ENCODE measurements at regions of chr17 and their contacts with region 1.

Region 1: GRCh38 chr17:4565209-4566141 is 5.1 kb upstream of the GGT6 start:
- DNase-seq: peak; percentile 78
- ATAC-seq: peak; percentile 69
- H3K4me3 Mint-ChIP-seq: no peak overlapping the region
- H3K27ac Mint-ChIP-seq: no peak overlapping the region
- H3K4me1 Mint-ChIP-seq: peaks cover 38% of the 10 kb centered on the region
- H3K27me3 Mint-ChIP-seq: peaks cover 2% of the 10 kb centered on the region

Region 2: DNA sequence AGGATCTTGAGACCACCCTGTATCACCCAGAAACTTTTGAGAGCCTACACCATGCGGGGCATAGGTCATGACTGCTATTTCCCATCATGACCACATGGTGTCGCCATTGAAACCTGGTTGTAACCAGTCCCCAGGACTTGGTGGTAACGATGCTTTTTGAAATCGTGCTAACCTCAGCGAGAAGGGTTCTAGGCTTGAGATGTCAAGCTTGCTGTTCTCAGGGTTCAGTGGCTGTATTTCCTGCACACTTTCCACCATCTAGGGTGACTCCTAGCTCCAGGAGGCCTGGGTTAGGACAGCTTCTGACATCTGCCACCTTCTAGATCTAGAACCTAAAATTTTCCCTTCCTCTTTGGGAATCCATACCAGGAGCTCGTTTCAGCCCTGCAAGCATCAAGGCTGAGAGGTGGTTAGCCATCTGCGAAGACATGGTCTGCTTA is 144.8 kb before region 1 on chr17:
- CTCF ChIA-PET with region 1: interaction called, 4 read pairs
- POLR2A ChIA-PET with region 1: no interaction called
- intact Hi-C with region 1: loop called in 1 of 2 experiments (anchors 2 kb)
- DNase-seq: peak; percentile 74
- ATAC-seq: peak; percentile 97
- H3K4me3 Mint-ChIP-seq: no peak overlapping the region
- H3K27ac Mint-ChIP-seq: no peak overlapping the region
- H3K4me1 Mint-ChIP-seq: no peaks in the 10 kb centered on the region
- H3K27me3 Mint-ChIP-seq: no peaks in the 10 kb centered on the region

Region 3: GRCh38 chr17:4625181-4625617 is 59.7 kb after region 1 on chr17:
- CTCF ChIA-PET with region 1: interaction called, 78 read pairs
- POLR2A ChIA-PET with region 1: no interaction called
- intact Hi-C with region 1: loop called (anchors 1 kb)
- DNase-seq: no peak
- ATAC-seq: no peak
- H3K4me3 Mint-ChIP-seq: no peak overlapping the region
- H3K27ac Mint-ChIP-seq: no peak overlapping the region
- H3K4me1 Mint-ChIP-seq: no peaks in the 10 kb centered on the region
- H3K27me3 Mint-ChIP-seq: peaks cover 13% of the 10 kb centered on the region

Region 4: GRCh38 chr17:4696437-4696805 is 130.9 kb after region 1 on chr17:
- CTCF ChIA-PET with region 1: interaction called, 4 read pairs
- POLR2A ChIA-PET with region 1: no interaction called
- intact Hi-C with region 1: loop called in 1 of 2 experiments (anchors 5 kb)
- DNase-seq: peak; percentile 38
- ATAC-seq: peak; percentile 95
- H3K4me3 Mint-ChIP-seq: peak overlapping the region; percentile 30
- H3K27ac Mint-ChIP-seq: peak overlapping the region; percentile 92
- H3K4me1 Mint-ChIP-seq: peaks cover 50% of the 10 kb centered on the region
- H3K27me3 Mint-ChIP-seq: no peaks in the 10 kb centered on the region

Region 5: GRCh38 chr17:4789901-4790704 is 224.6 kb after region 1 on chr17:
- CTCF ChIA-PET with region 1: interaction called, 4 read pairs
- POLR2A ChIA-PET with region 1: no interaction called
- intact Hi-C with region 1: loop called in 1 of 2 experiments (anchors 1 kb)
- DNase-seq: peak; percentile 92
- ATAC-seq: peak; percentile 91
- H3K4me3 Mint-ChIP-seq: peak overlapping the region; percentile 64
- H3K27ac Mint-ChIP-seq: peak overlapping the region; percentile 93
- H3K4me1 Mint-ChIP-seq: peaks cover 25% of the 10 kb centered on the region
- H3K27me3 Mint-ChIP-seq: peaks cover 34% of the 10 kb centered on the region

Region 6: GRCh38 chr17:4833178-4833940 is 267.9 kb after region 1 on chr17 and contains the start of gene MINK1:
- CTCF ChIA-PET with region 1: no interaction called
- POLR2A ChIA-PET with region 1: no interaction called
- intact Hi-C with region 1: loop called in 1 of 2 experiments (anchors 2 kb)
- DNase-seq: peak; percentile 92
- ATAC-seq: peak; percentile 93
- H3K4me3 Mint-ChIP-seq: peak within 1 kb of the TSS; percentile 90
- H3K27ac Mint-ChIP-seq: peak within 1 kb of the TSS; percentile 91
- H3K4me1 Mint-ChIP-seq: peaks cover 28% of the 10 kb centered on the region
- H3K27me3 Mint-ChIP-seq: no peaks in the 10 kb centered on the region
- total RNA-seq, gene MINK1: 48.2 to 57.7 TPM

Region 7: GRCh38 chr17:4903051-4903818 is 337.8 kb after region 1 on chr17 and contains the start of gene CHRNE:
- CTCF ChIA-PET with region 1: interaction called, 10 read pairs
- POLR2A ChIA-PET with region 1: no interaction called
- intact Hi-C with region 1: loop called (anchors 1 to 5 kb)
- DNase-seq: peak; percentile 89
- ATAC-seq: peak; percentile 44
- H3K4me3 Mint-ChIP-seq: peak within 1 kb of the TSS; percentile 65
- H3K27ac Mint-ChIP-seq: peak within 1 kb of the TSS; percentile 72
- H3K4me1 Mint-ChIP-seq: peaks cover 26% of the 10 kb centered on the region
- H3K27me3 Mint-ChIP-seq: no peaks in the 10 kb centered on the region
- total RNA-seq, gene CHRNE: 0.59 to 0.84 TPM

Measured in activated CD4-positive, alpha-beta T cell treated with anti-CD3 and anti-CD28 coated beads for 36 hours (primary cell).